H1 (cell line): ENCODE measurements at regions of chr17 and their contacts with region 1.

Region 1: DNA sequence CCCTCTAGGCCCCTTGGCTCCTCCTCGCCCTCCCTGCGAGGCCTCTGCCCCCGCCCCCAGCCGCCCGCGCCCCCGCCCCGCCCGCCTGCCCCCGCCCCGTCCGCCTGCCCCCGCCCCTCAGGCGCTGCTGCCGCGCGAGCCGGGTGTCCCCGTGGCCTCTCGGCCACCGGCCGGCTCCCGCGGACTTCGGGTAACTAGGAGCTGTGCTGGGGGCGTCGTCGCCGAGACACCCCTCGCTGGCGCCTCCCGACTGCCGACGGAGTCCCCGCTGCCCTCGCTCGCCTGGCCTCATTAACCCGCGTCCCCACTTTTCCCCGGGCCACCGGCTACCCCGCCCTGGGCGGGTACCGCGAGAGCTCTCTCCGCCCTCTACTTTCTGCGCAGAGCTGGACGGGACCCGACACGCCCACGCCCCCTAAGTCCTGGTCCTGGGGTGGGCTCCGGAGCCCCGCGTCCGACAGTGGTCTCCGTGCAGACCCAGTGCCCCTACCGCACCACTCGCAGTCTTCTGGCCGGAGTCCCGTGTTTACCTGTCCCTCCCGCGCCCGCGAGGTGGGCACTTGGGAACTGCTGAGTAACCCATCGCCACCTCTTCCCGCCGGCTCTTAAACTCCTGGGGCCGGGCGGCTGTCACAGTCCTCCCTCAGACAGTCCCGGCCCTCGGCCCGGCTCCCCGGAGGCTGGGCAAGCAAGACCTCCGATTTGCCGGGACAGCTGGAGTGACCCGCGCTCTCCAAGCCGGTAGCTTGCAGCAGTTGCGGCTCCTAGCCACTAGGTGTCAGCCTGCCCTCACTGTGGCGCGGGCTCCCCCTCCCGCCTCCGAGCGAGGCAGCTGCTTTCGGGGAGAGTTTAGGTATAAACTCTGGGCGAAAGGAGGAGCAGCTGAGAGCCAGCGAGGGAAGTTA is at the start of gene TLCD1:
- DNase-seq: peak; percentile 93 to 98
- H3K4me3 ChIP-seq: peak within 1 kb of the TSS; percentile 81 to 97 (median 89)
- H3K27ac ChIP-seq: peak within 1 kb of the TSS; percentile 89
- H3K4me1 ChIP-seq: peaks cover 0 to 12% (median 5%) of the 10 kb centered on the region in 4 experiments; a peak in 6 of 7 replicates
- H3K27me3 ChIP-seq: no peaks in the 10 kb centered on the region
- CTCF ChIP-seq: peak; percentile 98 to 99 (median 99)
- EP300 ChIP-seq: peak in 1 of 2 experiments; percentile 70; a peak in 1 of 3 replicates
- POLR2A ChIP-seq: no peak; a peak in 2 of 3 replicates
- RAD21 ChIP-seq: peak; percentile 98 to 99
- total RNA-seq, gene TLCD1: 40.7 and 45.3 TPM in 2 replicates

Region 2: GRCh38 chr17:28701987-28702751 is 24.3 kb before region 1 on chr17:
- CTCF ChIA-PET with region 1: interaction called, 6 read pairs
- POLR2A ChIA-PET with region 1: interaction called, 16 read pairs
- DNase-seq: no peak
- H3K4me3 ChIP-seq: no peak overlapping the region
- H3K27ac ChIP-seq: 0 out of 2 replicates have a peak overlapping the region, but pooled peaks have one; percentile 19
- H3K4me1 ChIP-seq: peaks cover 0 to 11% (median 4%) of the 10 kb centered on the region in 4 experiments; a peak in 4 of 7 replicates
- H3K27me3 ChIP-seq: no peaks in the 10 kb centered on the region
- CTCF ChIP-seq: no peak
- EP300 ChIP-seq: no peak
- POLR2A ChIP-seq: peak in 1 of 2 experiments; percentile 45; a peak in 1 of 3 replicates
- RAD21 ChIP-seq: no peak

Region 3: DNA sequence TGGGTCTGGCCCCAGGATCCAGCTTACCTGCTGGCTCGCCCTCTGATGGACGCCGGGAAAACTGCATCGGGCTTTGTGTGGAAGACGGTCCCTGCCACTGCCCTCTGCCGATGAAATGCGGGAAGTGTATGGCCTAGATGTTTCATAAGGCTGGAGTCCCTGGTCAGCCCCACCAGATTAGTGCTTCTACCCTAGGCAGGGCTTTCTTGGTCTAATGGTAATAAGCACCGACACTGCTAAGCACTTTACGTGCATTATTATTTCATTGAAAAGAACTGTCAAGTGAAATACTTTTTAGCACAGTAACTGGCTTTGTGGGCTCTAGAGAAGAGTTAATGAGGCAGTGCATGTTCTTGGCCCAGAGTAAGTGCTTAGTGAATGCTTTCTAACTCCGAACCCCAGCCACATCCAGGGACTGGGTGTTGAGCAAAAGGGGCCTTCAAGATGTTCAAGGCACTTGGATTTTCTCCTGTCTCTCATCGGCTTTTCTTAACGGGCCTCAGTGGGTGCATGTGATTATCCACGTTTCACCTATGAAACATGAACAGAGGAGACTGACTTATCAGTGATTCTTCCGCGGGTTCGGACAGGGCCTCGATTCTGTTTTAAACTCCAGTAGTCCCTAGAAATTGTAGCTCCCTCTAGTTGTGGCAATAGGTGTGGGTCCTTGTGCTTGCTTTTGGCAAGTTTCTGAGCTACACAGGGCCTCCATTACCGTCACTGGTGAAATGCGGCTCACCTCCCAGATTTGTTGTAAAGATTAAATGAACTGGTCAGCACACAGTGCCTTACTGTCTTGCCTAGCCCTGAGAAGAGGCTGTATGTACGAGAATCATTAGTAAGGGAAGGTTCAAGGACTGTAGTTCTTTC is 23.9 kb after region 1 on chr17:
- CTCF ChIA-PET with region 1: interaction called, 316 read pairs
- POLR2A ChIA-PET with region 1: interaction called, 813 read pairs
- DNase-seq: peak in 1 of 2 experiments; percentile 96
- H3K4me3 ChIP-seq: no peak overlapping the region
- H3K27ac ChIP-seq: no peak overlapping the region
- H3K4me1 ChIP-seq: peaks cover 0 to 30% (median 24%) of the 10 kb centered on the region in 4 experiments; a peak in 6 of 7 replicates
- H3K27me3 ChIP-seq: no peaks in the 10 kb centered on the region
- CTCF ChIP-seq: peak; percentile 98 to 100 (median 100)
- EP300 ChIP-seq: 0 out of 3 replicates have a peak, but pooled peaks of 1 of the 2 experiments have one; percentile 5
- POLR2A ChIP-seq: peak in 1 of 2 experiments; percentile 73; a peak in 2 of 3 replicates
- RAD21 ChIP-seq: peak; percentile 71 to 81

Region 4: DNA sequence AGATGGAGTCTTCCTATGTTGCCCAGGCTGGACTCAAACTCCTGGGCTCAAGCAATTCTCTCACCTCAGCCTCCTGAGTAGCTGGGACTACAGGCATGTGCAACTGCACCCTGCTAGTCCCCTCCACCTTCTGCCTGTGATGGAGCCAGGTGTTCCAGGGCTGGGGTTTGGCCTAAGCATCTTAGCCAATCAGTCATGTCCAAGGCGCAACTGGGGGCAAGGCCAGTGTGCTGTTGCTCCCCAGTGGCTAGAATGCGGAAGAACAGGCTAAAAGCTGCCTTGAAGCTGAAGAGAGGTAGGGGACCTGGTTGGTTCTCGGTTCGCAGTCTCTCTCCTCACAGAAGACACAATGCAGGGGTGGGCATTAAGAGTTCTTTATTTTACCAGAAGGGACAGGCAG is 152.5 kb after region 1 on chr17:
- CTCF ChIA-PET with region 1: interaction called, 14 read pairs
- POLR2A ChIA-PET with region 1: interaction called, 13 read pairs
- DNase-seq: peak; percentile 67 to 75
- H3K4me3 ChIP-seq: no peak overlapping the region
- H3K27ac ChIP-seq: no peak overlapping the region
- H3K4me1 ChIP-seq: no peaks in the 10 kb centered on the region; a peak in 3 of 7 replicates
- H3K27me3 ChIP-seq: no peaks in the 10 kb centered on the region; a peak in 1 of 7 replicates
- CTCF ChIP-seq: peak; percentile 81 to 96 (median 85)
- EP300 ChIP-seq: no peak
- POLR2A ChIP-seq: no peak
- RAD21 ChIP-seq: peak; percentile 90 to 94

Region 5: DNA sequence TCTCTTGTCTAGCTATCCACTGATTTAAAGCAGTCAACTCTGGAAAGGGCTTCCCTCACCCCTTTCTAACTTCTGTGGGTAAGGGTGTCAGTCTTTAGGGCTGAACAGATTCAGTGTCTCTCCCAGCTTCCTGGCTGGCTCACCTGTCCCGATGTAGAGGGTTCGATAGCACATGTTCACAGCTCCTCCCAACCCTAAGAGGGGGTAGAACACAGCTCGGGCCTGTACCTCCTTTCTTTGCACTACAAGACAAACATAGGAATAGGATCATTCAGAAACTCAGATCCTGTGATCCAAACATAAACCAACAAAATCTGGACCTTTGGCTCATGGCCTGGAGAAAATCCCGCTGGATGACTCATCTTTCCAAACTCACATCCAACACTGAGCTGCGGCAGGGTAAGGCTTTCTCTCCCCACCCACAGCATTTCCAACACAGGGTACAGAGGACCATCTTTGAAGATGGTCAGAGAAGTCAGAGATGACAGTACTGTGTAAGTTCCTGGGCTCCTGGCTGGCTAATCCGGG is 182.2 kb after region 1 on chr17:
- CTCF ChIA-PET with region 1: interaction called, 45 read pairs
- POLR2A ChIA-PET with region 1: interaction called, 71 read pairs
- DNase-seq: no peak
- H3K4me3 ChIP-seq: no peak overlapping the region
- H3K27ac ChIP-seq: no peak overlapping the region
- H3K4me1 ChIP-seq: peaks cover 0 to 6% (median 0%) of the 10 kb centered on the region in 4 experiments; a peak in 5 of 7 replicates
- H3K27me3 ChIP-seq: no peaks in the 10 kb centered on the region
- CTCF ChIP-seq: no peak
- EP300 ChIP-seq: no peak
- POLR2A ChIP-seq: no peak
- RAD21 ChIP-seq: no peak

Region 6: GRCh38 chr17:28960256-28961061 is 234.0 kb after region 1 on chr17:
- CTCF ChIA-PET with region 1: no interaction called
- POLR2A ChIA-PET with region 1: no interaction called
- DNase-seq: no peak
- H3K4me3 ChIP-seq: no peak overlapping the region
- H3K27ac ChIP-seq: no peak overlapping the region
- H3K4me1 ChIP-seq: peaks cover 0 to 9% (median 5%) of the 10 kb centered on the region in 4 experiments; a peak in 3 of 7 replicates
- H3K27me3 ChIP-seq: no peaks in the 10 kb centered on the region; a peak in 1 of 7 replicates
- CTCF ChIP-seq: no peak
- EP300 ChIP-seq: no peak
- POLR2A ChIP-seq: no peak
- RAD21 ChIP-seq: no peak